Naive thymus-derived CD4-positive, alpha-beta T cell (primary cell): ENCODE measurements at regions of chr13 and their contacts with region 1.

Region 1: DNA sequence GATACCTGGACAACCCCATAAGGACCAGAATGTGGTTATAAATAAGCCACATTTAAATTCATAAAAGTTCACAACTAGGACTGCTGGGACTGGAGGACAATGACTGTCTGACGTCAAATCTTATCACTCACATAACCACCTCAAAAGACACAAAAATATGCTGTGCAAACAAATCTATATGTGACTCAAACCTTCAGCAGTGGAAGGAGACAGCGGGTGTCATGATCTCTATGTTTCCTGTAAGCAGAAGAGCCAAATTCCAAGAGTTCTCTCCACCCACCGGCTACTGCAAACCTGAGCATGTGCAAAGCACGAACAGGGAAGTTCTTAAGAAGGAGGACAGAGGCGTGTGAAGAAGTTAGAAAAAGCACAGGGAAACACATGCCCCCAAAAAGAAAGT is 113.2 kb downstream of the MYCBP2 start:
- DNase-seq: no peak
- ATAC-seq: no peak
- H3K4me3 ChIP-seq: no peak overlapping the region
- H3K4me3 Mint-ChIP-seq: no peak overlapping the region
- H3K27ac ChIP-seq: no peak overlapping the region
- H3K27ac Mint-ChIP-seq: peak overlapping the region in 5 of 9 donors; percentile 34 to 74 (median 52)
- H3K4me1 ChIP-seq: no peaks in the 10 kb centered on the region
- H3K4me1 Mint-ChIP-seq: peaks cover 7 to 18% (median 16%) of the 10 kb centered on the region in 7 donors
- H3K27me3 ChIP-seq: no peaks in the 10 kb centered on the region
- H3K27me3 Mint-ChIP-seq: no peaks in the 10 kb centered on the region

Region 2: GRCh38 chr13:77168237-77168636 is 45.4 kb before region 1 on chr13:
- CTCF ChIA-PET with region 1: no interaction called
- POLR2A ChIA-PET with region 1: no interaction called
- intact Hi-C with region 1: no loop called
- DNase-seq: no peak
- ATAC-seq: no peak
- H3K4me3 ChIP-seq: no peak overlapping the region
- H3K4me3 Mint-ChIP-seq: no peak overlapping the region
- H3K27ac ChIP-seq: no peak overlapping the region
- H3K27ac Mint-ChIP-seq: no peak overlapping the region
- H3K4me1 ChIP-seq: no peaks in the 10 kb centered on the region
- H3K4me1 Mint-ChIP-seq: peaks cover 0 to 12% (median 7%) of the 10 kb centered on the region in 7 donors
- H3K27me3 ChIP-seq: no peaks in the 10 kb centered on the region
- H3K27me3 Mint-ChIP-seq: no peaks in the 10 kb centered on the region

Region 3: GRCh38 chr13:77230560-77230959 is 16.9 kb after region 1 on chr13:
- CTCF ChIA-PET with region 1: no interaction called
- POLR2A ChIA-PET with region 1: interaction called, 3 read pairs
- intact Hi-C with region 1: loop called in 1 of 2 experiments (anchors 1 kb)
- DNase-seq: no peak
- ATAC-seq: no peak
- H3K4me3 ChIP-seq: no peak overlapping the region
- H3K4me3 Mint-ChIP-seq: no peak overlapping the region
- H3K27ac ChIP-seq: no peak overlapping the region
- H3K27ac Mint-ChIP-seq: peak overlapping the region in 1 of 9 donors; percentile 24
- H3K4me1 ChIP-seq: peaks cover 0 to 3% of the 10 kb centered on the region in 2 donors
- H3K4me1 Mint-ChIP-seq: peaks cover 13 to 35% (median 22%) of the 10 kb centered on the region in 7 donors
- H3K27me3 ChIP-seq: no peaks in the 10 kb centered on the region
- H3K27me3 Mint-ChIP-seq: no peaks in the 10 kb centered on the region